Right cardiac atrium (tissue), 5 donors: ENCODE measurements at regions of chr5 and their contacts with region 1.

Region 1: GRCh38 chr5:58460732-58461286 is 923 bp upstream of the PLK2 start:
- DNase-seq: peak; percentile 92 to 96 (median 95)
- ATAC-seq: peak; percentile 89 to 90
- H3K4me3 ChIP-seq: peak overlapping the region; percentile 91
- H3K27ac ChIP-seq: peak overlapping the region; percentile 89
- H3K4me1 ChIP-seq: no peaks in the 10 kb centered on the region
- H3K27me3 ChIP-seq: no peaks in the 10 kb centered on the region

Region 2: DNA sequence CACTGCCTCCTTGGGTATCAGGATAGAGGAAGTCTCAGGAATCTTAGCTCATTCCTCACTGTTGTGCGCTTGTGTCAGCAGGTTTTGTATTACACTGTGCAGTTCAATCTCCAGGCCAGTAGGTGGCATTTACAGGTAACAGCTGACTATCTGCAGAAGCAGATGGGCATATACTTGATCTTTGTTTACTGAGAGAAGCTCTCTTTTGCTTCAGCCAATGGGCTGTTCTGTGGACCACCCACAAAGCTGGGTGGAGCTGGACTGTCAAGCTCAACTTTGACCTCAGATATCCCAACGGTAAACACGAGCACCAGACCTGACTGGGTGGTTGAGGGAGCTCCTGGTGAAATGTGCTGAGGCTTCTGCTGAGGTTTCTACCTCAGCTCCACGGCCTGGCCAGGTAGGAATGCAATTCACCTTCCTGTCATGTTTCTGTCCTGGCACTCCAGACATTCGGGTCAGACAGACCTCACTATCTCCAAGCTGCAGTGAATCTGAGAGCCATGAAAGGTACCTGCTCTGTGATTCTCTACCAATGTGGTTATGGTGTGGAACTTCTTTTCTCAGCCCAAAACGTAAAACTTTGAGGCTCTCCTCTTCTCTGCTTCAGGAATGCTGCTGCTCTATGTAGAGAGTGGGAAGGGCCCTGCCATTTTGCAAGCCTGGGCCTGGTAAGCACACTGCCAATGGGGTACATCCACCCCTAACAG is 810.3 kb before region 1 on chr5:
- intact Hi-C with region 1: loop called in 1 of 4 experiments (anchors 5 kb)
- DNase-seq: peak in 1 of 3 donors; percentile 12
- ATAC-seq: peak; percentile 48 to 57
- H3K4me3 ChIP-seq: no peak overlapping the region
- H3K27ac ChIP-seq: no peak overlapping the region
- H3K4me1 ChIP-seq: no peaks in the 10 kb centered on the region
- H3K27me3 ChIP-seq: no peaks in the 10 kb centered on the region

Region 3: GRCh38 chr5:57887851-57888621 is 572.8 kb before region 1 on chr5:
- intact Hi-C with region 1: loop called (anchors 2 to 5 kb)
- DNase-seq: peak in 2 of 3 donors; percentile 24 to 33
- ATAC-seq: peak; percentile 91 to 96
- H3K4me3 ChIP-seq: no peak overlapping the region
- H3K27ac ChIP-seq: no peak overlapping the region
- H3K4me1 ChIP-seq: no peaks in the 10 kb centered on the region
- H3K27me3 ChIP-seq: no peaks in the 10 kb centered on the region

Region 4: DNA sequence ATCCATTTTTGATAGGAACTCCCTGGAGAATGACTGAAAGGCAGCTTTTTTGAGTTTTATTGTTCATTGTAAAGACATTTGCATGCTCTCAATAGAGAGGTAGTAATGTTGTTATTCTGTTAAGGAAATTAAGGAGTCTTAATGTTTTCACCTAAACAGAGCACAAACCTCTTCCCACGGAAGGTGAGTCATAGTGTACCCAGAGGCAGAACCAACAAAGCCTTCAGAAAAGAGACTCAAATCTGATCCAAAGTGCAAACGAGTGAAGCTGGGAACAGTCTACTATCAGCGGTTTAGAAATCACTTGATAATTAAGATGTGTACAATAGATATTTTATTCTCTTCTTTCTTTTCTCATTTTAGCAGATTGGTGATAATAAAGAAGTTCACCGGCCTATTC is 471.4 kb before region 1 on chr5:
- intact Hi-C with region 1: no loop called
- DNase-seq: no peak
- ATAC-seq: no peak
- H3K4me3 ChIP-seq: no peak overlapping the region
- H3K27ac ChIP-seq: no peak overlapping the region
- H3K4me1 ChIP-seq: peaks cover 2% of the 10 kb centered on the region
- H3K27me3 ChIP-seq: no peaks in the 10 kb centered on the region

Region 5: DNA sequence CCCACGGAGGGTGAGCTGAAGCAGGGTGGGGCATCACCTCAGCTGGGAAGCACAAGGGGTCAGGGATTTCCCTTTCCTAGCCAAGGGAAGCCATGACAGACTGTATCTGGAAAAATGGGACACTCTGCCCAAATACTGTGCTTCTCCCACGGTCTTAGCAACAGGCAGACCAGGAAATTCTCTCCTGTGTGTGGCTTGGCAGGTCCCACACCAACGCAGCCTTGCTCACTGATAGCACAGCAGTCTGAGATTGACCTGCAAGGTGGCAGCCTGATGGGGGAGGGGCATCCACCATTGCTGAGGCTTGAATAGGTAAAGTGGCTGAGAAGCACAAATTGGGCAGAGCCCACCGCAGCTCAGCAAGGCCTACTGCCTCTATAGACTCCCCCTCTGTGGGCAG is 145.3 kb after region 1 on chr5:
- intact Hi-C with region 1: no loop called
- DNase-seq: no peak
- ATAC-seq: no peak
- H3K4me3 ChIP-seq: no peak overlapping the region
- H3K27ac ChIP-seq: no peak overlapping the region
- H3K4me1 ChIP-seq: no peaks in the 10 kb centered on the region
- H3K27me3 ChIP-seq: no peaks in the 10 kb centered on the region